ENCODE measurements at regions of chr1 and their contacts with region 1.

Region 1: GRCh38 chr1:167460836-167461235 is 57.5 kb downstream of the CD247 start:
- DNase-seq: peak; percentile 48 to 76 (median 61)
- H3K4me3 ChIP-seq: no peak overlapping the region
- H3K4me3 Mint-ChIP-seq: peak overlapping the region in 4 of 8 donors; percentile 31 to 70 (median 42)
- H3K27ac ChIP-seq: peak overlapping the region; percentile 50
- H3K27ac Mint-ChIP-seq: peak overlapping the region; percentile 88 to 95 (median 93)
- H3K4me1 ChIP-seq: peaks cover 92% of the 10 kb centered on the region
- H3K4me1 Mint-ChIP-seq: peaks cover 59 to 90% (median 73%) of the 10 kb centered on the region in 4 donors
- H3K27me3 ChIP-seq: no peaks in the 10 kb centered on the region
- H3K27me3 Mint-ChIP-seq: no peaks in the 10 kb centered on the region

Region 2: GRCh38 chr1:167474191-167474716 is 13.4 kb after region 1 on chr1:
- CTCF ChIA-PET with region 1: interaction called, 5 read pairs
- POLR2A ChIA-PET with region 1: interaction called, 46 read pairs
- intact Hi-C with region 1: loop called (anchors 1 kb)
- DNase-seq: peak; percentile 42 to 84 (median 51)
- H3K4me3 ChIP-seq: peak overlapping the region in 1 of 2 donors; percentile 32
- H3K4me3 Mint-ChIP-seq: peak overlapping the region; percentile 49 to 89 (median 80)
- H3K27ac ChIP-seq: peak overlapping the region; percentile 48
- H3K27ac Mint-ChIP-seq: peak overlapping the region; percentile 80 to 100 (median 92)
- H3K4me1 ChIP-seq: peaks cover 97% of the 10 kb centered on the region
- H3K4me1 Mint-ChIP-seq: peaks cover 62 to 99% (median 76%) of the 10 kb centered on the region in 4 donors
- H3K27me3 ChIP-seq: no peaks in the 10 kb centered on the region
- H3K27me3 Mint-ChIP-seq: no peaks in the 10 kb centered on the region